ENCODE measurements at regions of chr11 and their contacts with region 1.

Region 1: GRCh38 chr11:20355221-20356219 is 8.0 kb upstream of the HTATIP2 start:
- DNase-seq: peak; percentile 57
- H3K4me3 Mint-ChIP-seq: no peak overlapping the region
- H3K27ac Mint-ChIP-seq: no peak overlapping the region
- H3K4me1 Mint-ChIP-seq: peaks cover 37% of the 10 kb centered on the region
- H3K27me3 Mint-ChIP-seq: no peaks in the 10 kb centered on the region
- CTCF ChIP-seq: peak; percentile 52

Region 2: DNA sequence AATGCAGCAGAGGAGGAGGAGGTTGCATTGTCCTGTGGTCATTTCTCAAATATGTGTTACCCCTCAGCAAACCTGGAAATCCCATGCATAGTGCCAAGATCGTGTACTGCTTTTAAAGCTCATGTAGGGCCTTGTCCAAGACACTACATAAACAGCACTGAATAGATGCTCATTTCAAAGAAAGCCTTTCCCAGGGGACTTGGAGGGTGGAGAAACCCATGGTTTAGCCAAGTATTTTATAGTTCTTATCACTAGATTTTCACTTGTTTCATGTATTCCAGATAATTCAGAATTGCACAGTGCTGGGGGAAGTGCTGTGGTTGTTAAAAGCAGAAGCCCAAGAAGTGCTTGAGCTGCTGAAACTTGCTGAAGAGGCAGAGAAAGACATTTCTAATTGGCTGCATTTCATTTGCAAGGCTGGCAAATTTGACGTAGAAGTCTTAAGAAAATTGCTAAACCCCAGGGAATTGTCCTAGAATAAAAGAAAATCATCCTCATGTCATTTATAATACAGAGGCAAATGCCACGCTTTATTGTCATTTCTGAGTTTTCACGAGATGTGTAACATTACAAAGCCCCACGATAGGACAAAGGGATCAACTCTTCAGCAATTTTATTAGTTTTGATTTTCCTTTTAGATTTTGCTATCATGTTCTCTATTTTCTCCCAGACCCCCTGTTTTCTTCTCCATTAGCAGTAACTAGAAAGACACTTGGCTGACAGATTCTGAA is 1173.8 kb before region 1 on chr11:
- CTCF ChIA-PET with region 1: no interaction called
- intact Hi-C with region 1: no loop called
- DNase-seq: no peak
- H3K4me3 Mint-ChIP-seq: no peak overlapping the region
- H3K27ac Mint-ChIP-seq: no peak overlapping the region
- H3K4me1 Mint-ChIP-seq: no peaks in the 10 kb centered on the region
- H3K27me3 Mint-ChIP-seq: no peaks in the 10 kb centered on the region
- CTCF ChIP-seq: no peak

Region 3: DNA sequence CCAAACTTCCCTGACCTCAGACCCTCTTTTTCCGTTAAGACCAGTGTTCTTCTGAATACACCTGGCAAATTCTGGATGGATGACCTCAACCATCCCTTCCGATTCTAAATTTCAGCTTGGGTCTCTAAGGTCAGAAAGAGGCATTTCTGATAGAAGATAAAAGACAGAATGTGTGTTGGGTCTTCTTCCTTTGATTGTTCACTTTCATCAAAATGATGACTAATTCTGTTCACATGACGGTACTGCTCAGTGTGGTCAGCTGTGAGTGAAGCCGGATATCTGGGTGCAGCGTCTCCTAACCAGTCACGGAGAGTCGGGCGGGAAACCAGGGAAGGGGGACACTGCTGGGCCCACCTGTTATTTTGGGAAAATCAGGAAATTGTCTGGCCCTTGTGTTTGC is 794.5 kb before region 1 on chr11:
- CTCF ChIA-PET with region 1: no interaction called
- intact Hi-C with region 1: loop called (anchors 10 kb)
- DNase-seq: no peak
- H3K4me3 Mint-ChIP-seq: no peak overlapping the region
- H3K27ac Mint-ChIP-seq: no peak overlapping the region
- H3K4me1 Mint-ChIP-seq: peaks cover 8% of the 10 kb centered on the region
- H3K27me3 Mint-ChIP-seq: peaks cover 43% of the 10 kb centered on the region
- CTCF ChIP-seq: no peak

Region 4: DNA sequence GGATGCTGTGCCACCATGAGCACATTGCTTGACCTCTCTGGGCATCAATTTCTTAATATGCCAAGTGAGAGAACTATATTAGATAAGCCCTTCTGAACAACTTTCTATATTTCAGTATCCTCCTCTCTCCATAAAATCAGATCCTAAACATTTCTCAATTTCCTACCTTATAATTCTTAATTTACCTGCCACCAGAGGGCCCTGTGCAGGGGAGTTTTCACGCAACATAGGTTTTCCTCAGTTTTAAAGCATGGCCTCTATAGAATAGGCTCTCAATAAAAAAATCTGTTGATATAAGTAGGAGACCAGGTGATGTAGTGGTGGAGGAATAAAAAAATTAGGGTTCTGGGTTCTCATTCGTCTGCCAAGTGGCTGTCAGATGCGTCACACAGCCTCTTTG is 111.5 kb before region 1 on chr11:
- CTCF ChIA-PET with region 1: interaction called, 3 read pairs
- intact Hi-C with region 1: loop called (anchors 1 kb)
- DNase-seq: no peak
- H3K4me3 Mint-ChIP-seq: no peak overlapping the region
- H3K27ac Mint-ChIP-seq: no peak overlapping the region
- H3K4me1 Mint-ChIP-seq: no peaks in the 10 kb centered on the region
- H3K27me3 Mint-ChIP-seq: peaks cover 38% of the 10 kb centered on the region
- CTCF ChIP-seq: peak; percentile 17

Measured in Calu3 (cell line).